CD4-positive, alpha-beta memory T cell (primary cell): ENCODE measurements at regions of chr21 and their contacts with region 1.

Region 1: DNA sequence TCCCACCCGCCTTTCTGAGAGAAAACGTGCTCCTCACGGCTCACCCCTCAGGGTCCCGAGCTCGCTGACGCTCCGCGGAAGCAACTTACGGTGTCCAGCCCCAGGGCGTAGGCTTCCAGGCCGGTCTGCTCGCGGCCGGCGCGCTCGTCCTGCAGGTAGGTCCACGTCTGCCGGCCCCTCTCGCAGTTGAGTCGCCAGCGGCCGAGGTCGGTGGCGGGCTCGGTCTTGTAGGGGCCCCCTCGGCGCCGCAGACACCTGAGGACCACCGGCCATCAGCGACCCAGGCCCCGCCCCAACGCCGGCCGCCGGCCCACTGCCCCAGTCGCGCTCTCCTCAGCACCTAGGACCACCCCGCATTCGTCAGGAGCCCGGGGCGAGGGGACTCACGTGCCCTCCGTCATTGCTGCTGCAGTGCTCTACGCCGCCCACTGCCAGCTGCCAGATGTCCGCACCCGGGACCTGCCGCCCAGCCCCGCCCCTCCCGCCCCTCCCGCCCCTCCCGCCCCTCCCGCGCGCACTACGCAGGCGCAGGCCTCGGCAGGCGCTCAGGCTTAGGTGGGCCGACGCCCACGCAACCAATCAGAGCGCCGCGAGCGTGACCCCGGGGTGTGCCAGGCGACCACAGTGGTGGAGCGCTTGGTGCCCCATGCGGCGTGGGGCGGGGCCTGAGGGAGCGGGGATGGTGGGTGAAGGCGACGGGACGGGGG is at the start of gene LSS:
- DNase-seq: peak; percentile 96 to 98 (median 98)
- H3K4me3 ChIP-seq: peak within 1 kb of the TSS; percentile 65 to 72
- H3K4me3 Mint-ChIP-seq: peak within 1 kb of the TSS; percentile 91 to 98 (median 96)
- H3K27ac ChIP-seq: peak within 1 kb of the TSS; percentile 76
- H3K27ac Mint-ChIP-seq: peak within 1 kb of the TSS; percentile 61 to 99 (median 97)
- H3K4me1 ChIP-seq: peaks cover 28% of the 10 kb centered on the region
- H3K4me1 Mint-ChIP-seq: peaks cover 30 to 56% (median 44%) of the 10 kb centered on the region in 4 donors
- H3K27me3 ChIP-seq: no peaks in the 10 kb centered on the region
- H3K27me3 Mint-ChIP-seq: no peaks in the 10 kb centered on the region
- total RNA-seq, gene LSS: 53.2 to 54.5 TPM

Region 2: DNA sequence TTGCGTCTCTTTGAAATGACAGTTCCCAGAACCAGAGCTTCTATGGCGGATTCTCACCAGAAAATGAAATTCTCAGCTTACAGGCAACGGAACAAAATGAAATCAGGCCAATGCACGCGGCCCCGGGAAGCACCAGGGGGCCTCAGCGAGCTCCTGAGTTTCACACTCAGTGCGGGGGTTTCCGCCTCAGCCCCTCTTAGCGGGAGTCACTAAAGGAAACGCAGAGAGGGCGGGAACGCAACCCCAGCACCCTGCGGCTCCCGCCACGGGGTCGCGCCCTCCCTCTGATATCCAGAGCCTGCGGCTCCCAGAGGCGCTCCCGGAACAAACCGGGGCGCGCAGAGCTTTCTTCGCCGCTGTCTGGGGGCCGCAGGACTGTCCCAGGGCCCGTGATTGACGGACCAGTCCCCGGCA is 254.8 kb before region 1 on chr21:
- CTCF ChIA-PET with region 1: no interaction called
- POLR2A ChIA-PET with region 1: no interaction called
- intact Hi-C with region 1: loop called (anchors 5 kb)
- DNase-seq: peak; percentile 64 to 81 (median 73)
- H3K4me3 ChIP-seq: peak overlapping the region; percentile 52 to 63
- H3K4me3 Mint-ChIP-seq: peak overlapping the region; percentile 87 to 96 (median 90)
- H3K27ac ChIP-seq: no peak overlapping the region
- H3K27ac Mint-ChIP-seq: peak overlapping the region; percentile 53 to 84 (median 68)
- H3K4me1 ChIP-seq: peaks cover 39% of the 10 kb centered on the region
- H3K4me1 Mint-ChIP-seq: peaks cover 3 to 30% (median 7%) of the 10 kb centered on the region in 4 donors
- H3K27me3 ChIP-seq: peaks cover 35% of the 10 kb centered on the region
- H3K27me3 Mint-ChIP-seq: peaks cover 9 to 22% of the 10 kb centered on the region in 2 donors

Region 3: GRCh38 chr21:46144464-46145070 is 83.9 kb before region 1 on chr21:
- CTCF ChIA-PET with region 1: interaction called, 6 read pairs
- POLR2A ChIA-PET with region 1: interaction called, 5 read pairs
- intact Hi-C with region 1: loop called (anchors 1 kb)
- DNase-seq: no peak
- H3K4me3 ChIP-seq: no peak overlapping the region
- H3K4me3 Mint-ChIP-seq: peak overlapping the region in 3 of 8 donors; percentile 15 to 49 (median 38)
- H3K27ac ChIP-seq: no peak overlapping the region
- H3K27ac Mint-ChIP-seq: peak overlapping the region in 4 of 7 donors; percentile 2 to 85 (median 60)
- H3K4me1 ChIP-seq: peaks cover 5% of the 10 kb centered on the region
- H3K4me1 Mint-ChIP-seq: peaks cover 4 to 8% (median 5%) of the 10 kb centered on the region in 4 donors
- H3K27me3 ChIP-seq: no peaks in the 10 kb centered on the region
- H3K27me3 Mint-ChIP-seq: no peaks in the 10 kb centered on the region

Region 4: GRCh38 chr21:46184625-46185555 is 43.6 kb before region 1 on chr21:
- CTCF ChIA-PET with region 1: no interaction called
- POLR2A ChIA-PET with region 1: no interaction called
- intact Hi-C with region 1: loop called (anchors 5 kb)
- DNase-seq: peak; percentile 63 to 80 (median 66)
- H3K4me3 ChIP-seq: peak overlapping the region; percentile 42
- H3K4me3 Mint-ChIP-seq: peak overlapping the region; percentile 76 to 91 (median 84)
- H3K27ac ChIP-seq: peak overlapping the region; percentile 53
- H3K27ac Mint-ChIP-seq: peak overlapping the region; percentile 19 to 88 (median 77)
- H3K4me1 ChIP-seq: peaks cover 5% of the 10 kb centered on the region
- H3K4me1 Mint-ChIP-seq: peaks cover 1 to 11% (median 6%) of the 10 kb centered on the region in 4 donors
- H3K27me3 ChIP-seq: peaks cover 4% of the 10 kb centered on the region
- H3K27me3 Mint-ChIP-seq: peaks cover 2 to 3% of the 10 kb centered on the region in 2 donors